Posterior cingulate gyrus (tissue), 11 donors: ENCODE measurements at regions of chr10 and their contacts with region 1.

Region 1: GRCh38 chr10:63157845-63158624 is 24.9 kb downstream of the NRBF2 start:
- DNase-seq: peak in 2 of 10 donors; percentile 22 to 31

Region 2: GRCh38 chr10:62437696-62438095 is 720.3 kb before region 1 on chr10:
- intact Hi-C with region 1: loop called (anchors 2 kb)
- DNase-seq: no peak

Region 3: GRCh38 chr10:62594093-62594520 is 563.9 kb before region 1 on chr10:
- intact Hi-C with region 1: loop called (anchors 5 kb)
- DNase-seq: peak in 8 of 10 donors; percentile 53 to 94 (median 62)

Region 4: DNA sequence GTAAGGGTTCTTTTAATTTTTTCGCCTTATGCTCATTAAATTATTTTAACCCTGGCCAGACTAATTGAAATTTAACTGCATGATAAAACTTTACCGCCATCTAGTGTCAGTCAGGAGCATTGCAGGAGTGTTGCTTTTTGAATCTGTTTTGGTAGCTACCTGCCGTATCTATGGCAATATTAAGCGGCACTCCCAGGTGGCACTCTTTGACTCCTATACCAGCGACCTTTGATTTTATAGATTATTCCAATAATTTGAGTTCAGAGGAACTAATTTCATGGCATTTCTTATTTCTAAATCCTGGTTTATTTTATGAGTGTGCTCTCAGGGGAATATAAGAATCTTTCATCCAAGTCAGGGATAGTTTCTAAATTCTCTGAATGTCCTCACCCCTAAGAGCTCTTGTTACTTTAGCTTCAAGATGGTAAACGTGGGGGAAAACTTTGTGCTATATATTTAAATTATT is 562.1 kb after region 1 on chr10:
- intact Hi-C with region 1: loop called (anchors 2 kb)
- DNase-seq: peak in 3 of 10 donors; percentile 22 to 47 (median 35)